ENCODE measurements at regions of chr2 and their contacts with region 1.

Region 1: GRCh38 chr2:78237704-78238103 is 715.5 kb upstream of the LRRTM4 start:
- DNase-seq: no peak
- ATAC-seq: no peak
- H3K4me3 ChIP-seq: no peak overlapping the region
- H3K27ac ChIP-seq: no peak overlapping the region
- H3K4me1 ChIP-seq: no peaks in the 10 kb centered on the region
- H3K27me3 ChIP-seq: no peaks in the 10 kb centered on the region

Region 2: GRCh38 chr2:77796397-77796796 is 441.3 kb before region 1 on chr2:
- intact Hi-C with region 1: loop called in 1 of 2 experiments (anchors 10 kb)
- DNase-seq: no peak
- ATAC-seq: no peak
- H3K4me3 ChIP-seq: no peak overlapping the region
- H3K27ac ChIP-seq: no peak overlapping the region
- H3K4me1 ChIP-seq: no peaks in the 10 kb centered on the region
- H3K27me3 ChIP-seq: no peaks in the 10 kb centered on the region

Measured in aorta (tissue), 5 donors.